Activated naive CD4-positive, alpha-beta T cell treated with anti-CD3 and anti-CD28 coated beads for 36 hours (primary cell): ENCODE measurements at regions of chr2 and their contacts with region 1.

Region 1: GRCh38 chr2:191566344-191566743 is 111.6 kb upstream of the NABP1 start:
- DNase-seq: peak; percentile 83
- H3K4me3 Mint-ChIP-seq: no peak overlapping the region
- H3K27ac Mint-ChIP-seq: no peak overlapping the region
- H3K4me1 Mint-ChIP-seq: peaks cover 20% of the 10 kb centered on the region
- H3K27me3 Mint-ChIP-seq: peaks cover 11% of the 10 kb centered on the region

Region 2: GRCh38 chr2:191311628-191312027 is 254.7 kb before region 1 on chr2:
- CTCF ChIA-PET with region 1: no interaction called
- intact Hi-C with region 1: no loop called
- DNase-seq: no peak
- H3K4me3 Mint-ChIP-seq: no peak overlapping the region
- H3K27ac Mint-ChIP-seq: no peak overlapping the region
- H3K4me1 Mint-ChIP-seq: no peaks in the 10 kb centered on the region
- H3K27me3 Mint-ChIP-seq: no peaks in the 10 kb centered on the region

Region 3: GRCh38 chr2:191478799-191479679 is 87.3 kb before region 1 on chr2:
- CTCF ChIA-PET with region 1: no interaction called
- intact Hi-C with region 1: no loop called
- DNase-seq: no peak
- H3K4me3 Mint-ChIP-seq: no peak overlapping the region
- H3K27ac Mint-ChIP-seq: no peak overlapping the region
- H3K4me1 Mint-ChIP-seq: no peaks in the 10 kb centered on the region
- H3K27me3 Mint-ChIP-seq: peaks cover 10% of the 10 kb centered on the region

Region 4: GRCh38 chr2:191555092-191555742 is 11.1 kb before region 1 on chr2:
- CTCF ChIA-PET with region 1: interaction called, 34 read pairs
- intact Hi-C with region 1: no loop called
- DNase-seq: peak; percentile 93
- H3K4me3 Mint-ChIP-seq: no peak overlapping the region
- H3K27ac Mint-ChIP-seq: no peak overlapping the region
- H3K4me1 Mint-ChIP-seq: peaks cover 2% of the 10 kb centered on the region
- H3K27me3 Mint-ChIP-seq: no peaks in the 10 kb centered on the region

Region 5: GRCh38 chr2:191582355-191582754 is 16.0 kb after region 1 on chr2:
- CTCF ChIA-PET with region 1: no interaction called
- intact Hi-C with region 1: no loop called
- DNase-seq: no peak
- H3K4me3 Mint-ChIP-seq: no peak overlapping the region
- H3K27ac Mint-ChIP-seq: no peak overlapping the region
- H3K4me1 Mint-ChIP-seq: peaks cover 1% of the 10 kb centered on the region
- H3K27me3 Mint-ChIP-seq: no peaks in the 10 kb centered on the region

Region 6: DNA sequence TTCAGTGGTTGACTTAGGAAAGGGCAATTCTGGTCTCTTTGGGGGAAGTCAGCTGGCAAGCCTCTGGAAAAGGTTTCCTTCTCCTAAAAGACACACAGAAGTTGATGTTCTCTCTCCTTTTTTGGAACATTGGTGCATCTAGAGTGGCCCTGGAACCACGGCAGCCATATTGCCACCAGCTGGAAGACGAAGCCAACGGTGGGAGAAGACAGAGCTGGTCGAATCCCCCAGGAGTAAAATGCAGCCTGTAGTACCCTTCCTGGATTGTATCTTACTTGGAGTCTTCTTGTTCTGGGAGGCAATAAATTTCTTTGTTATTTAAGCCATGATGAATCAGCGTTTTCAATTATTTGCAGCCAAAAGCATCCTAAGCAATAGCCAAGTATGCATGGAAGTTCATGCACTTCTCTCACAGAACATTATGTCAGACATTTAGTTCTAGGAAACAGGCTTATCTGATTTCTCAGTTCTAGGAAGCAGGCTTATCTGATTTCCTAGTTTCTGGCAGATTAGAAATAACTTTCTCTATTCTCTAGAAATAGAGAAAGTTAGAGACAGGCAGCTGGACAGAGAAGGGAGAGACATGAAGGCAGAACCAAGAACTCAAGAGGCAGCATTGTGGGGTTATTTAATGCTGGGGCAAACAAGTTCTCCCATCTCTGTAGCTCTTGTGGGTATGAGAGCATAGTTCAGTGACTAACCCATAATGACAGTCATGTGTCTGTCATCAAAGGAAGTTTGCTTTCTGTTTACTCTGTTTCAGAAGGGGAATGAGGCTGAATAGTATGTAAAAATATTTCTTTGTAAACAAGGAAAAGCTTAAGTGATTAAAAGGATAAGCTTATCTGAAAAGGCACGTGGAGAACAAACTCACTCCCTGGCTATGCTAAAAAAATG is 71.1 kb after region 1 on chr2:
- CTCF ChIA-PET with region 1: interaction called, 6 read pairs
- intact Hi-C with region 1: loop called (anchors 1 kb)
- DNase-seq: no peak
- H3K4me3 Mint-ChIP-seq: no peak overlapping the region
- H3K27ac Mint-ChIP-seq: peak overlapping the region; percentile 77
- H3K4me1 Mint-ChIP-seq: peaks cover 58% of the 10 kb centered on the region
- H3K27me3 Mint-ChIP-seq: no peaks in the 10 kb centered on the region

Region 7: DNA sequence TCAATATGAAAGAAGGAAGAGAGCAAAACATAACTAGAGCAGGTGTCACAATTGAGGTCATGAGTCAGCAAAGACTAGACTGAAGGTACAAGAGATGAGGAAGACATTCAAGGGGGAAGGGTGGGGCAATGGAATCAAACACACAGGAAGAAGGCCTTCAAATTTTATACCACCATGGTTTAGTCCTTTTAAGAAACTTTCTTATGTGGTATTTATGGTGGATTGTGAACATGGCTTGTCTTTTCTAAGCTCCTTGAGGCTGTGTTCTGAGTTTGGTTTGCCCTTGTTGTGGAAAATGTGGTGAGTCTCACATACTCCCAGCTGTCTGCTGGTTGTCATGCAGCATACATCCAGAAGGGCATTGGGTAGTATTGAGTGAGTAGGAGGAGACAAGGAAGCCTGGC is 173.7 kb after region 1 on chr2:
- CTCF ChIA-PET with region 1: no interaction called
- intact Hi-C with region 1: loop called (anchors 1 kb)
- DNase-seq: peak; percentile 50
- H3K4me3 Mint-ChIP-seq: no peak overlapping the region
- H3K27ac Mint-ChIP-seq: peak overlapping the region; percentile 47
- H3K4me1 Mint-ChIP-seq: peaks cover 12% of the 10 kb centered on the region
- H3K27me3 Mint-ChIP-seq: peaks cover 3% of the 10 kb centered on the region

Region 8: DNA sequence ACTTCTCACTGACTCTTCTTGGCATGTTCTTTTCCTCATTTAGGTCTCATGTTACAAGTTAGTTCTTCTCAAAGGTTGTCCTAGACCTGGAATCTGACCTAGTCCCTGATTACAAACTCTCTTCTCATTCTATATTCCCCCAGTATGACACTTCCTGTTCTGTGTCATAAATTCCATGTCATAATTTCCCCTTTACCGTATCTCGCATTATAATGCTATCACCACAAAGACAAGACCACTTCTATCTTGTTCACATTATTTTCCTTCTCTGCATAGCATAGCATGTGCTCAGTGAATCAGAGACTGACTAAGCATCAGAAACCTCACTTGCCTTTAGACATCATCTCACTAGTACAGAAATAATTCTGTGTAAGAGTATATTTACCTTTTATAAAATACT is 344.2 kb after region 1 on chr2:
- CTCF ChIA-PET with region 1: no interaction called
- intact Hi-C with region 1: loop called (anchors 5 kb)
- DNase-seq: no peak
- H3K4me3 Mint-ChIP-seq: no peak overlapping the region
- H3K27ac Mint-ChIP-seq: no peak overlapping the region
- H3K4me1 Mint-ChIP-seq: peaks cover 6% of the 10 kb centered on the region
- H3K27me3 Mint-ChIP-seq: peaks cover 2% of the 10 kb centered on the region